ENCODE measurements at regions of chr19 and their contacts with region 1.

Region 1: GRCh38 chr19:43723588-43723987 is 7.7 kb downstream of the IRGC start:
- DNase-seq: no peak
- H3K4me3 ChIP-seq: no peak overlapping the region
- CTCF ChIP-seq: peak; percentile 29

Region 2: DNA sequence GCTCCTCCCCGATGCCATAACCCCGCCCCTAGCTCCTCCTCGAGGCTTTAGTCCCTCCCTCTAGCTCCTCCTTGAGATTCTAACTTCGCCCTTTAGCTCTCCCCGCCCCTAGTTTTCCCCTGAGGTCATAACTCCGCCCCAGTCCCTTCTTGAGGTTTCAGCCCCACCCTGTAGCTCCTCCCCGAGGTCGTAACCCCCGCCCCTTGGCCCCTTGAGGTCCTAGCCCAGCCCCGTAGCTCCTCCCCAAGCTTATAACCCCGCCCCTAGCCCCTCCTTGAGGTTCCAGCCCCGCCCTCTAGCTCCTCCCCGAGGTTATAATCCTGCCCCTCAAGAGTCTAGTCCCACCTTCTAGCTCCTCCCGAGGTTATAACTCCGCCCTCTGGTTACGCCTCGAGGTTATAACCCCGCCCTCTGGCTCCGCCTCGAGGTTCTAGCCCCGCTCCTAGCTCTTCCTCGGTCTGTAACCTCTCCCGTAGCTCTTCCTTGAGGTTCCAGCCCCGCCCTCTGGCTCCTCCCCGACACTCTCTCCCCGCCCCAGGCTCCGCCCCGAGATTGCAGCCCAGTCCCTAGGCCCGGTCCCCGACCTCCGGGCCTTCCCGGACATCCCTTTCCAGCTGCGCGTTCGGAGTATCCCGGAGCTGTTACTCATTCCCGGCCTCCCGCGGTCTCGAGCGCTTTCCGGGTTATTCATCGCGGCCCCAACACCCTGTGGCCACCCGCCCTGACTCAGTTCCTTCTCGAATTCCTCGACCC is 55.0 kb before region 1 on chr19:
- in situ Hi-C with region 1: loop called (anchors 10 kb)
- DNase-seq: peak; percentile 99
- H3K4me3 ChIP-seq: peak overlapping the region; percentile 80
- CTCF ChIP-seq: no peak

Region 3: DNA sequence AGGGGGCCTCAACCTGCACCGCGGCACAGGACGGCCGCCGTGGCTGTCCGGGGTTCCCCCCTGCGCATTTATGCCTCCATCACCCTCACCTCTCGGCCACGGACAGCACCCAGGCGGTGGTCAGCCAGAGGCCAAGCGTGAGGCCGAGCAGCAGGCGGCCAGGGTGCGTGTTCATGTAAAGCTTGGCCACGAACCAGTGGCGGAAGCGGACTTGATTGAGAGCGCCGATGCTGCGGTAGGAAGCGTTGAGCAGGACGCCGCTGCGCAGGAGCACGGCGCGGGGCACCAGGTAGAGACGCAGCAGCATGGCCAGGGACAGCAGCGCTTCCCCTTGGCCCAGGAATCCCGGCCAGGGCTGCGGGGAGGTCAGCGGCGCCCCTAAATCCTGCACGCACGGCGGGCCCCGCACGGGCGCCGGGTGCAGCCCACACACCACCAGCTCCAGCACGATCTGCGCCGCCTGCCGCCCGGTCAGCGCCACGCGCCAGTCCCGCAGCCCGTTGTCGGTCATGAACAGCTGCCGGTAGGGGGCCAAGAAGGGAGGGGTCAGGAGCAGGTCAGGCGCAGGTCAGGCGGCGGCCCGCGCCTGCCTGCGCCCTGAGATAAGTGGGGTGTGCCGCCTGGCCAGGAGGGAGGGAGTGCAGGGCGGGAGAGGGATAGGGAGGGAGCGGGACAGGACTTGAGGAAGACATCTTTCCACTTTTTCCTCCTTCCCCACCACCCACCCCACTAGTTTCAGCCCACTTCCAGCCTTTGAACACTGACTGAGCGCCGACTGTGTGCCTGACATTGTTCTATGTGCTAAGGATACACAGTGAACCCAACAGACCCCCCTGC is 50.7 kb after region 1 on chr19:
- in situ Hi-C with region 1: loop called (anchors 5 kb)
- DNase-seq: no peak
- H3K4me3 ChIP-seq: peak overlapping the region; percentile 22
- CTCF ChIP-seq: peak; percentile 73

Region 4: DNA sequence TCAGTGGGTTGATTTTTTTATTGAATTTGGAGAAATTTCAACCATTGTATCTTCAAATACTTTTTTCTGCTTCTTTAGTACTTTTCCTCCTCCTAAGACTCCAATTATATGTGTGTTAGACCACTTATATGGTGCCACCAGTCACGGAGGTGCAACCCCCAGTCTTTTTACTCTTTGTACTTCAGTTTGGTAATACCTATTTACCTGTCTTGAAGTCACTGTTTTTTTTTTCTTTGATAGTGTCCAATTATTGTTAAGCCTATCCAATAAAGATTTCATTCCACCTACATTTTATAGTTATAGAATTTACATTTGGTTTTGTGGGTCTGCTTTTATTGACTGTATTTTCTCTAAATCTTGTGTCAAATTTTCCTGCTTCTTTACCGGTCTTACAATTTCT is 118.4 kb after region 1 on chr19:
- in situ Hi-C with region 1: no loop called
- DNase-seq: no peak
- H3K4me3 ChIP-seq: no peak overlapping the region
- CTCF ChIP-seq: no peak